Tibial artery (tissue), 4 donors: ENCODE measurements at regions of chr17 and their contacts with region 1.

Region 1: DNA sequence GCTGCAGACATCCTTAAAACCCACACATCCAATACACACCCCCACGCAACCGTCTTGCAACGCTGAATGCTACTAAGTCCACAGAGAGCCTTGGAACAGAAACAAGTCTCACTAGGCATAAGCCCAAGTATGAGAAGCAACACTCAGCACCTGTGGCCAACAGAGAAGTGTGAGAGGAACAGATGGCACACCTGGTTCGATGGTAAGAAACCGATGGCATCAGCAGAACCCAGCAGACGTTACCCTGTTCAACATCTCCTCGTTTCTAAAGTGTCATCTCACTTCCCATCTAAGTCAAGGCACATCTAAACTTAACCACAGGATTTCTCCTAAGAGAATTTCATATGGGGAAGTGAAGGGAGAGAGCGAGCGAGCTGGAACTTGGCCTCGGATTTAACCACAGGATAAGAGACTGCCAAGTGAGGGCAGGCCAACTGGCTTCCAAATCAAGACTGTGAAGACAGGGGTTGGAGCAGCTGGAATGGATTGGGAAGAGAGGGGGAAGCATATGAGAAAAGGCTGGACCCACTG is 41.0 kb downstream of the NXPH3 start:
- DNase-seq: peak; percentile 83 to 91
- H3K4me3 ChIP-seq: peak overlapping the region in 1 of 2 donors; percentile 11
- H3K27ac ChIP-seq: peak overlapping the region; percentile 86 to 90
- H3K4me1 ChIP-seq: peaks cover 0 to 88% (median 30%) of the 10 kb centered on the region in 4 donors
- H3K27me3 ChIP-seq: no peaks in the 10 kb centered on the region
- CTCF ChIP-seq: peak in 1 of 2 experiments; percentile 7

Region 2: GRCh38 chr17:49677933-49678847 is 61.5 kb after region 1 on chr17 and contains the start of gene SPOP:
- intact Hi-C with region 1: loop called (anchors 10 kb)
- DNase-seq: peak; percentile 100
- H3K4me3 ChIP-seq: peak within 1 kb of the TSS; percentile 73 to 80
- H3K27ac ChIP-seq: peak within 1 kb of the TSS; percentile 95 to 99
- H3K4me1 ChIP-seq: peaks cover 0 to 38% (median 24%) of the 10 kb centered on the region in 4 donors
- H3K27me3 ChIP-seq: no peaks in the 10 kb centered on the region
- CTCF ChIP-seq: no peak

Region 3: GRCh38 chr17:49815761-49816281 is 199.2 kb after region 1 on chr17:
- intact Hi-C with region 1: no loop called
- DNase-seq: no peak
- H3K4me3 ChIP-seq: no peak overlapping the region
- H3K27ac ChIP-seq: peak overlapping the region; percentile 5 to 66
- H3K4me1 ChIP-seq: peaks cover 0 to 43% (median 31%) of the 10 kb centered on the region in 4 donors
- H3K27me3 ChIP-seq: no peaks in the 10 kb centered on the region
- CTCF ChIP-seq: no peak